ENCODE measurements at regions of chr9 and their contacts with region 1.

Region 1: DNA sequence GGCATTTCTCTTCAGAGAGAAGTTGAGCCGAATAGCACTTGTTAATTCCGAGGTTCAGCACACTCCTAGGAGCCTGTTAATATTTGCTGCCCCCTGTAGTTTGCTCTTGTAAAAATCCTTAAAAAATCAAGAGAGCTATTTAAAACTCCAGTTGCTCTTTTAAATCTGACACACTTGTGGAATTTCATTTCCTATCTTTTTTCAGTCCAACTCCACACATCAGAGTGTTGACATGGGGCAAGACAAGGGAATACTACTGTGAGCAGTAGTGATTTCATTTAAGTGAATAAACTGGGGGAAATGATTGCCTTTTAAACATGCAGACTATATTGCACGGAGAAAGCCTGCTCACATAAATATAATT is 1096.3 kb upstream of the DMAC1 start:
- DNase-seq: peak in 1 of 2 donors; percentile 78
- H3K4me3 ChIP-seq: no peak overlapping the region
- H3K27ac ChIP-seq: no peak overlapping the region
- H3K4me1 ChIP-seq: peaks cover 0 to 12% (median 4%) of the 10 kb centered on the region in 4 donors
- H3K27me3 ChIP-seq: no peaks in the 10 kb centered on the region
- CTCF ChIP-seq: peak in 4 of 7 experiments; percentile 25 to 48 (median 34)
- EP300 ChIP-seq: no peak
- POLR2A ChIP-seq: no peak

Region 2: DNA sequence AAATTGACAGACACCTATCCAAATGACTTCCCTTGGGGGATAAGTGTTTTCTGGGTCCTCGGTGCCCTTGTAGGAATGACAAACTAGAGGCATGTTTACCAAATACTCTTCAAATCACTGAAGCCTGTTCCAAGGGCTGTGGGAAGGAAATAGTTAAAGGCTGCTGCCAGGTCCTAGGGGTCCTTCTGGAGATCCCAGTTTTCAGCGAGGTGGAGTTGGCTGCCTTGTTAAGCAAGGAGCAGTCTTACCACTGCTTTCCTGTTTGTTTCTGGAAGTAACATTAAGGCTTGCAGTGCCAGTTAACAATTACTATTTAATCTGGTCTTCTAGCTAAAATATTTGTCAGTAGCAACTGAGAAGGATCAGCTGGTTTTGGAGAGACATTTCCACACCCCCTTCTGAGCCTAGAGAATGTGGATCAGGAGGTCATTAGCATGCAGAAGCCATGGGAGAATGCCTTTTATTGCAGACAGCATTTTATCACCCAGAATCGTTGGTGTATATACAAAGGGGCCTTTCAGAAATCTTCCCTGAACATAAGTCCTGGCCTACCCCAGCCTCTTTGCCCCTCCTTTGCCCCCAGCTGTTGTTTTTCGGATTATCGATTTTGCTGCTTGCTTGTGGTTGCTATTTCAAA is 1335.1 kb before region 1 on chr9:
- intact Hi-C with region 1: loop called (anchors 10 kb)
- DNase-seq: peak in 1 of 2 donors; percentile 40
- H3K4me3 ChIP-seq: no peak overlapping the region
- H3K27ac ChIP-seq: no peak overlapping the region
- H3K4me1 ChIP-seq: no peaks in the 10 kb centered on the region
- H3K27me3 ChIP-seq: no peaks in the 10 kb centered on the region
- CTCF ChIP-seq: no peak
- EP300 ChIP-seq: no peak
- POLR2A ChIP-seq: no peak

Region 3: GRCh38 chr9:8649160-8649559 is 246.7 kb before region 1 on chr9:
- intact Hi-C with region 1: no loop called
- DNase-seq: peak in 1 of 2 donors; percentile 9
- H3K4me3 ChIP-seq: no peak overlapping the region
- H3K27ac ChIP-seq: no peak overlapping the region
- H3K4me1 ChIP-seq: peaks cover 0 to 6% (median 0%) of the 10 kb centered on the region in 4 donors
- H3K27me3 ChIP-seq: no peaks in the 10 kb centered on the region
- CTCF ChIP-seq: no peak
- EP300 ChIP-seq: no peak
- POLR2A ChIP-seq: no peak

Region 4: DNA sequence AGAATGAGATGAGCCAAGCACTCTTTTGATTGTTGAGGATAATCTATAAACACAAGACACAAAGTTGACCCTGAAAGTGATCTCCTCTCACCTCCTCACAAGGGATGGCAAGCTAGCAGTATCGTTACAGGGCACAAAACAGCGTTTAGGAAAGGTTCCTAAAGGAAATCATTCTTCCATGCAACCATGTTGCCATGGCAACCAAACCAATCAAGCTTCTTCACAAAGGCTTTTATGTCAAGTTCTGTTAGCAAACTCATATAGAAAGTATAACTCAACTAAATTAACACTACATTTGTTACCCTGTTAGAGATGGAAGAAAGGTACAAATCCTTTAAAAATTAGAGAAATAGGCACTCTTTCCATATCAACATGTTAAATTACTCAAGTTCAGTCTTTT is 79.5 kb before region 1 on chr9:
- intact Hi-C with region 1: no loop called
- DNase-seq: peak in 1 of 2 donors; percentile 43
- H3K4me3 ChIP-seq: no peak overlapping the region
- H3K27ac ChIP-seq: no peak overlapping the region
- H3K4me1 ChIP-seq: no peaks in the 10 kb centered on the region
- H3K27me3 ChIP-seq: no peaks in the 10 kb centered on the region
- CTCF ChIP-seq: no peak
- EP300 ChIP-seq: no peak
- POLR2A ChIP-seq: no peak